CD8-positive, alpha-beta T cell (primary cell): ENCODE measurements at regions of chr3 and their contacts with region 1.

Region 1: GRCh38 chr3:139857472-139857871 is 77.5 kb upstream of the CLSTN2 start:
- DNase-seq: no peak
- ATAC-seq: no peak
- H3K4me3 ChIP-seq: no peak overlapping the region
- H3K4me3 Mint-ChIP-seq: no peak overlapping the region
- H3K27ac ChIP-seq: no peak overlapping the region
- H3K27ac Mint-ChIP-seq: no peak overlapping the region
- H3K4me1 ChIP-seq: no peaks in the 10 kb centered on the region
- H3K4me1 Mint-ChIP-seq: no peaks in the 10 kb centered on the region
- H3K27me3 ChIP-seq: no peaks in the 10 kb centered on the region
- H3K27me3 Mint-ChIP-seq: no peaks in the 10 kb centered on the region
- CTCF ChIP-seq: no peak

Region 2: DNA sequence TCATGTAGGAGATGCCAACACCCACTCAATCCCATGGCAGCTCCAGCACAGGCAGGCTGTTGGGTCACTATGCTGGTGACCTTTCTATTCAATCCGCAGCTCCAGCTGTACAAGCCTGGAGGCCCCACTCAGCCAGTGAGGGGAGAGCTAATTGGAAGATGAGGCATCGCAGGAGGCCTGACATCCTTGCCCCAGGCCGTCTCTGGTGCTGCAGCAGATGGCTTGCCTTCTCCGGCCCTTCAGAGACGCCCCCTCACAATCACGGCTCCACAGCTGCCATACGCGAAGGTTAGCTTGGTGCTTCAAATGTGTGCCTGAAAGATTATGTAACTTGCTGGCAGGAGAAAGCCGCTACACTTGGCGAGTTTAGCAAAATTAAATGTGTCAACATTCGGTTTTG is 26.7 kb before region 1 on chr3:
- CTCF ChIA-PET with region 1: no interaction called
- POLR2A ChIA-PET with region 1: no interaction called
- intact Hi-C with region 1: no loop called
- DNase-seq: no peak
- ATAC-seq: no peak
- H3K4me3 ChIP-seq: no peak overlapping the region
- H3K4me3 Mint-ChIP-seq: no peak overlapping the region
- H3K27ac ChIP-seq: no peak overlapping the region
- H3K27ac Mint-ChIP-seq: no peak overlapping the region
- H3K4me1 ChIP-seq: no peaks in the 10 kb centered on the region
- H3K4me1 Mint-ChIP-seq: no peaks in the 10 kb centered on the region
- H3K27me3 ChIP-seq: no peaks in the 10 kb centered on the region
- H3K27me3 Mint-ChIP-seq: no peaks in the 10 kb centered on the region
- CTCF ChIP-seq: no peak

Region 3: DNA sequence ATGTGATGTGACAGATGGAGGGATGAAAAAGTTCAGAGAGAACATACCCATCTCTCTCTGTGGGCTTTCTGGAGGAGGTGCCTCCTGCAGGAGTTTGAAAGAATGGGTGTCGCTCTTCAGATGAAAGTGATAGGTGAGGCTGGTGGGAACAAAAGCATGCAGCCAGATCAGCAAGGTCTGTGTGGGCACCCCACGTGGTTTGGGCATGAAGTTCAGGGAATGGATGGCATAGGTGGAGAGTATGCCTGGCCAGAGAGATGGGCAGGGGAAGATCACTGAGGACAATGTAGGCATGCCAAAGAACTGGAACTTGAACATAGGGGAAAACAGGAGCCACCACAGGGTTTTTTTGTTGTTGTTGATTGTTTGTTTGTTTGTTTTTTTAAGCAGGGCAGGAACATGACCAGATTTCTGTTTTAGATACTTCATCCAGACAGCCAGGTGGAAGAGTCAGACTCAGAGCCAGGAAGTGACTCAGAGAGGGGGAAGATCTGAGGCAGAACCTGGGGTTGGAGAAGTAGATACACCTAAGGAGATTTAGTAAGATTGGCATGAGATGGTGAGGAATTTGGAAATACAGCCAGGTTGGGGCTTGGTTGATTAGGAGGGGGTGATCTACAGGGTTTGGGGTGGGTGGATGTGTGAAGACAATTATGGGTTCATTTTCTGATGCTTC is 12.7 kb after region 1 on chr3:
- CTCF ChIA-PET with region 1: no interaction called
- POLR2A ChIA-PET with region 1: no interaction called
- intact Hi-C with region 1: loop called in 1 of 2 experiments (anchors 1 kb)
- DNase-seq: no peak
- ATAC-seq: no peak
- H3K4me3 ChIP-seq: no peak overlapping the region
- H3K4me3 Mint-ChIP-seq: no peak overlapping the region
- H3K27ac ChIP-seq: no peak overlapping the region
- H3K27ac Mint-ChIP-seq: no peak overlapping the region
- H3K4me1 ChIP-seq: no peaks in the 10 kb centered on the region
- H3K4me1 Mint-ChIP-seq: no peaks in the 10 kb centered on the region
- H3K27me3 ChIP-seq: no peaks in the 10 kb centered on the region
- H3K27me3 Mint-ChIP-seq: peaks cover 3% of the 10 kb centered on the region
- CTCF ChIP-seq: no peak

Region 4: GRCh38 chr3:139994891-139995290 is 137.4 kb after region 1 on chr3:
- CTCF ChIA-PET with region 1: no interaction called
- POLR2A ChIA-PET with region 1: no interaction called
- intact Hi-C with region 1: no loop called
- DNase-seq: no peak
- ATAC-seq: no peak
- H3K4me3 ChIP-seq: no peak overlapping the region
- H3K4me3 Mint-ChIP-seq: no peak overlapping the region
- H3K27ac ChIP-seq: no peak overlapping the region
- H3K27ac Mint-ChIP-seq: no peak overlapping the region
- H3K4me1 ChIP-seq: no peaks in the 10 kb centered on the region
- H3K4me1 Mint-ChIP-seq: no peaks in the 10 kb centered on the region
- H3K27me3 ChIP-seq: no peaks in the 10 kb centered on the region
- H3K27me3 Mint-ChIP-seq: peaks cover 5% of the 10 kb centered on the region
- CTCF ChIP-seq: no peak